ENCODE measurements at regions of chr14 and their contacts with region 1.

Region 1: DNA sequence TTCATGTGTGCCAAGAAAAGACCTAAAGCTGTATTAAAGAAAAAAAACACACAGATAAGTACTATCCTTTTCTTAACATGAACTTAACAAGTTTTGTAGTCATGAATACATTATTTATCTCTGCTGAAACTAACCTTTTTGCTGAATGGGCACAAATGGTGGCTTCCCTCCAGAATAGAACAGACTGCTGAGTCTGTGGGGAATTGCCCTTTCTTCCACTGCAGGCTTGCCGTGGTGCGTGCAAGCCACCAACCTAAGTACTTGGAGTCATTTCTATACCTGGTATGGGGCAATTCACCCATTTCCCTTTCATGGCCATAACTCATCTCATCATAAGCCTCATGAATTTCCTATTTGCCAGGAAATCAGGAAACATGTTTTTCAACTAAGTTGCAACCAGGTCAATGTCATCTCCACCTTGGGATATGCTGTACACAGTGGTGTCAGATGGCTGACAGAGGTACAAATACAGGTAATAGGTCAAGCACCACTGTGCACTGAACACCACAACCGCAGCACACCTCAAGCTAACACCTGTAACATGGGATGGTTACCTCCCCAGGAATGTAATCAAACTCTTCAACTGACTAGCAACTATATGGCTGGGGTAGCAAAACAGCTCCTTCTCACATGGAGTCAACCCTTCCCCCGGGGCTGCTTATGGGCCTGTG is 49.9 kb downstream of the CATSPERB start:
- DNase-seq: no peak
- ATAC-seq: no peak
- H3K4me3 ChIP-seq: no peak overlapping the region
- H3K4me3 Mint-ChIP-seq: no peak overlapping the region
- H3K27ac ChIP-seq: no peak overlapping the region
- H3K27ac Mint-ChIP-seq: no peak overlapping the region
- H3K4me1 ChIP-seq: no peaks in the 10 kb centered on the region
- H3K4me1 Mint-ChIP-seq: peaks cover 0 to 6% (median 0%) of the 10 kb centered on the region in 3 donors
- H3K27me3 ChIP-seq: no peaks in the 10 kb centered on the region
- H3K27me3 Mint-ChIP-seq: no peaks in the 10 kb centered on the region

Region 2: DNA sequence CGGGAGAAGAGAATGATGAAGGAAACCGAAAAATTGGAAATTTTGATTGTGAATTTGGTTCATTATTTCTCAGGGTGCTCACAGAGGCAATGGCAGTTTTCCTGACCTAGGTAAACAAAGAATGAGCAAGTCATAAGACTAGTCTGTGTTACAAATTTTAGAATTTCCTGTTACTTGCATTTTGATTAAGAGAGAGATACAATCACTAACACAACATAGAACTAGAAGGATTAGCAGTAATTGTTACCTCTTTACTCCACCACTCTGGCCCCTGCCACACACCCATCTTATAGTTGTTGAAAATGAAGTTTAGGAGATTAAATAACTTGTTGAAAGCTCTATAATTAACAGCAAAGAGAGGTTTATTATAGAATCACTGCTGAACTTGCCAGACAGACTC is 12.2 kb before region 1 on chr14:
- CTCF ChIA-PET with region 1: no interaction called
- POLR2A ChIA-PET with region 1: no interaction called
- DNase-seq: no peak
- ATAC-seq: no peak
- H3K4me3 ChIP-seq: no peak overlapping the region
- H3K4me3 Mint-ChIP-seq: no peak overlapping the region
- H3K27ac ChIP-seq: no peak overlapping the region
- H3K27ac Mint-ChIP-seq: no peak overlapping the region
- H3K4me1 ChIP-seq: no peaks in the 10 kb centered on the region
- H3K4me1 Mint-ChIP-seq: no peaks in the 10 kb centered on the region
- H3K27me3 ChIP-seq: no peaks in the 10 kb centered on the region
- H3K27me3 Mint-ChIP-seq: no peaks in the 10 kb centered on the region

Region 3: GRCh38 chr14:91714805-91715204 is 32.8 kb after region 1 on chr14:
- CTCF ChIA-PET with region 1: interaction called in 1 of 2 experiments, 10 read pairs
- POLR2A ChIA-PET with region 1: no interaction called
- DNase-seq: peak in 34 of 35 experiments; percentile 5 to 68 (median 36)
- ATAC-seq: peak; percentile 79 to 99 (median 91)
- H3K4me3 ChIP-seq: no peak overlapping the region
- H3K4me3 Mint-ChIP-seq: peak overlapping the region in 2 of 3 donors; percentile 25 to 56
- H3K27ac ChIP-seq: no peak overlapping the region
- H3K27ac Mint-ChIP-seq: peak overlapping the region; percentile 19 to 61
- H3K4me1 ChIP-seq: peaks cover 3 to 6% of the 10 kb centered on the region in 2 experiments
- H3K4me1 Mint-ChIP-seq: peaks cover 6 to 12% (median 10%) of the 10 kb centered on the region in 3 donors
- H3K27me3 ChIP-seq: no peaks in the 10 kb centered on the region
- H3K27me3 Mint-ChIP-seq: no peaks in the 10 kb centered on the region